GM12878 (cell line): ENCODE measurements at regions of chr11 and their contacts with region 1.

Region 1: GRCh38 chr11:119334174-119334930 is at the start of gene RNF26:
- DNase-seq: peak; percentile 95
- ATAC-seq: peak; percentile 97
- H3K4me3 ChIP-seq: peak within 1 kb of the TSS; percentile 91
- H3K27ac ChIP-seq: peak within 1 kb of the TSS; percentile 85
- H3K4me1 ChIP-seq: peaks cover 12% of the 10 kb centered on the region
- H3K27me3 ChIP-seq: no peaks in the 10 kb centered on the region
- CTCF ChIP-seq: no peak
- EP300 ChIP-seq: no peak
- POLR2A ChIP-seq: peak; percentile 91
- RAD21 ChIP-seq: no peak
- polyA plus RNA-seq, gene RNF26: 2.8 to 4.2 TPM

Region 2: DNA sequence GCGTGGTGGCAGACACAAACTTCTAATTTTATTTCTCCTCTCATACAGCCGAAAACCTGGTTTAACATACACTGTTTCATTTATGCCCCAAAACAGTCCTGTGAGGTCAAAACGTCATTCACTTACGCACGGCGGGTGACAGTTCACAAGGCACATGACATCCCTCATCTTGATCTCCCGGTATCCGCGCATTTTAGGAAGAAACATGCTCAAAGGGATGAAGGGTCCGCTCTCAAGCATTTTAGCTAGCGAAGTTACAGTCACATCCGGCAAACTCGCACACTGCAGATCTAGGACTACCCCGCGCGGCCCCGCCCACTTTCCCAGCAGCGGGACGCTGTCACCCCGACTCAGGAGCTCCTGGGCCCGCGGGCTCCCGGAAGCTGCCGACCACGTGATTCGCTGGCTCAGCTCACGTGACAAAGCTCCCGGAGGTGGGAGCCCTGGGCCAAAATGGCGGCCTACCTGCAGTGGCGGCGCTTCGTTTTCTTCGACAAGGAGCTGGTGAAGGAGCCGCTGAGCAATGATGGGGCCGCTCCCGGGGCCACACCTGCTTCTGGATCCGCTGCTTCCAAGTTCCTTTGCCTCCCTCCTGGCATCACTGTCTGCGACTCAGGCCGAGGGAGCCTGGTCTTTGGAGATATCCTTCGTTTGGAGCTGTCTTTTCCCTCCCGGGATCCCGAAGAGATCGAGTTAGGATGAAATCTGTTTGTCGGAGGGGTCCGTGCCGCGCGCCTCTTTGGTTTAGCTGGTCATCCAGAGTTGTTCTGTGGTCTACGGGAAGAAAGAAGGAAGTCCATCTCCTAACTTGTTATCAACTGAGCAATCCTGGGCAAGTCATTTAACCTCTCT is 266.8 kb before region 1 on chr11 and contains the start of gene VPS11:
- CTCF ChIA-PET with region 1: interaction called, 9 read pairs
- POLR2A ChIA-PET with region 1: no interaction called
- RAD21 ChIA-PET with region 1: interaction called, 4 read pairs
- SMC1A ChIA-PET with region 1: no interaction called
- in situ Hi-C with region 1: no loop called
- intact Hi-C with region 1: loop called (anchors 5 kb)
- DNase-seq: peak; percentile 78
- ATAC-seq: peak; percentile 98
- H3K4me3 ChIP-seq: peak within 1 kb of the TSS; percentile 80
- H3K27ac ChIP-seq: peak within 1 kb of the TSS; percentile 59
- H3K4me1 ChIP-seq: no peaks in the 10 kb centered on the region
- H3K27me3 ChIP-seq: no peaks in the 10 kb centered on the region
- CTCF ChIP-seq: no peak
- EP300 ChIP-seq: 0 out of 4 replicates have a peak, but pooled peaks have one; percentile 17 to 29
- POLR2A ChIP-seq: peak; percentile 85
- RAD21 ChIP-seq: no peak
- polyA plus RNA-seq, gene VPS11: 18.3 to 18.9 TPM

Region 3: GRCh38 chr11:119205574-119206510 is 128.5 kb before region 1 on chr11 and contains the start of gene CBL:
- CTCF ChIA-PET with region 1: interaction called, 13 read pairs
- POLR2A ChIA-PET with region 1: interaction called, 3 read pairs
- RAD21 ChIA-PET with region 1: interaction called, 3 read pairs
- SMC1A ChIA-PET with region 1: no interaction called
- in situ Hi-C with region 1: no loop called
- intact Hi-C with region 1: no loop called
- DNase-seq: peak; percentile 47
- ATAC-seq: peak; percentile 91
- H3K4me3 ChIP-seq: peak within 1 kb of the TSS; percentile 93
- H3K27ac ChIP-seq: peak within 1 kb of the TSS; percentile 88
- H3K4me1 ChIP-seq: peaks cover 9% of the 10 kb centered on the region
- H3K27me3 ChIP-seq: no peaks in the 10 kb centered on the region
- CTCF ChIP-seq: peak; percentile 85 to 92 (median 91)
- EP300 ChIP-seq: no peak
- POLR2A ChIP-seq: peak; percentile 81
- RAD21 ChIP-seq: peak; percentile 62
- polyA plus RNA-seq, gene CBL: 3.9 to 7.6 TPM

Region 4: GRCh38 chr11:119315131-119316015 is 19.0 kb before region 1 on chr11:
- CTCF ChIA-PET with region 1: interaction called, 88 read pairs
- POLR2A ChIA-PET with region 1: interaction called, 9 read pairs
- RAD21 ChIA-PET with region 1: interaction called, 10 read pairs
- SMC1A ChIA-PET with region 1: interaction called, 14 read pairs
- in situ Hi-C with region 1: no loop called
- intact Hi-C with region 1: no loop called
- DNase-seq: no peak
- ATAC-seq: peak; percentile 61
- H3K4me3 ChIP-seq: peak overlapping the region; percentile 57
- H3K27ac ChIP-seq: no peak overlapping the region
- H3K4me1 ChIP-seq: peaks cover 35% of the 10 kb centered on the region
- H3K27me3 ChIP-seq: peaks cover 1 to 15% of the 10 kb centered on the region in 2 experiments; a peak in 3 of 4 replicates
- CTCF ChIP-seq: 0 out of 6 replicates have a peak, but pooled peaks of 2 of the 3 experiments have one; percentile 0 to 5
- EP300 ChIP-seq: no peak
- POLR2A ChIP-seq: no peak
- RAD21 ChIP-seq: no peak

Region 5: DNA sequence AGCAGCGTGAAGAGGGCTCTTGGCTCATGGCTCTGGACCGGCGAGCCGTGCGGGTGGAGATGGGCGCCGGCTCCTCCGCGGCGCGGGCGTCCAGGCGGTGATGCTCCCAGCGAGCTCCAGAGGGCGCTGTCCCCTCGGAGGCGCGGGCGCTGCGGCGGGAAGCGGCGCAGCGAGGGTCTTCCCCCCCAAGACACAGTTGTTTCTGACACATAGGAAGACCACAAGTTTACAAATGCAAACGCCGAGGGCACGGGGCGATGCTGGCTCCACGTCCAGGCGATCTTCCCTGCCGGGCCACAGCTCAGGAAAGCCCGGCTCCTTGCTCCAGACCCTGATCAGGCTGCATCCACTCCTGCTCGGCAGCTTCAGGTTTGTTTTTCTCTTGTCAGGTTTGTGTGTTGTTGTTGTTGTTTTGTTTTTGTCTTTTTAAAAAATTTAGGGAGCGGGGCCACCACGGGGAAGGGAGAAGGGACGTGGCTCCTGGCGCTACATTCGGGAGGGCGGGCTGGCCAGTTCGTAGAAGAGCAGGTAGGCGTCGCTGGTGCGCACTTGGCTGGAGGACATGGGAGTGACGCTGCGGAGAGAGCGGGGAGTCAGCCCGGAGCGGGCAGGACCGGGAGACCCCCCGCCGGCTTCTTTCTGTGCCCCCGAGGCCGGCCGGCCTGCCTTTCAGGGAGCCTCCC is 22.1 kb after region 1 on chr11:
- CTCF ChIA-PET with region 1: interaction called, 15 read pairs
- POLR2A ChIA-PET with region 1: interaction called, 3 read pairs
- RAD21 ChIA-PET with region 1: no interaction called
- SMC1A ChIA-PET with region 1: interaction called, 3 read pairs
- in situ Hi-C with region 1: no loop called
- intact Hi-C with region 1: no loop called
- DNase-seq: no peak
- ATAC-seq: peak; percentile 91
- H3K4me3 ChIP-seq: peak overlapping the region; percentile 49; the same call in 1 of the 2 replicates
- H3K27ac ChIP-seq: no peak overlapping the region
- H3K4me1 ChIP-seq: peaks cover 10% of the 10 kb centered on the region
- H3K27me3 ChIP-seq: peaks cover 2 to 4% of the 10 kb centered on the region in 2 experiments; a peak in 3 of 4 replicates
- CTCF ChIP-seq: peak; percentile 78 to 94 (median 90)
- EP300 ChIP-seq: no peak
- POLR2A ChIP-seq: no peak
- RAD21 ChIP-seq: peak; percentile 72

Region 6: GRCh38 chr11:119432484-119433357 is 98.4 kb after region 1 on chr11:
- CTCF ChIA-PET with region 1: no interaction called
- POLR2A ChIA-PET with region 1: no interaction called
- RAD21 ChIA-PET with region 1: no interaction called
- SMC1A ChIA-PET with region 1: no interaction called
- in situ Hi-C with region 1: no loop called
- intact Hi-C with region 1: no loop called
- DNase-seq: no peak
- ATAC-seq: peak; percentile 48; the same call in 1 of the 3 replicates
- H3K4me3 ChIP-seq: no peak overlapping the region
- H3K27ac ChIP-seq: no peak overlapping the region
- H3K4me1 ChIP-seq: no peaks in the 10 kb centered on the region
- H3K27me3 ChIP-seq: peaks cover 0 to 11% of the 10 kb centered on the region in 2 experiments; a peak in 2 of 4 replicates
- CTCF ChIP-seq: no peak
- EP300 ChIP-seq: no peak
- POLR2A ChIP-seq: no peak
- RAD21 ChIP-seq: no peak

Region 7: GRCh38 chr11:119474682-119475596 is 140.6 kb after region 1 on chr11:
- CTCF ChIA-PET with region 1: interaction called, 15 read pairs
- POLR2A ChIA-PET with region 1: interaction called, 3 read pairs
- RAD21 ChIA-PET with region 1: interaction called, 10 read pairs
- SMC1A ChIA-PET with region 1: interaction called, 3 read pairs
- in situ Hi-C with region 1: no loop called
- intact Hi-C with region 1: loop called (anchors 5 kb)
- DNase-seq: no peak
- ATAC-seq: peak; percentile 87
- H3K4me3 ChIP-seq: no peak overlapping the region
- H3K27ac ChIP-seq: no peak overlapping the region
- H3K4me1 ChIP-seq: no peaks in the 10 kb centered on the region
- H3K27me3 ChIP-seq: peaks cover 0 to 1% of the 10 kb centered on the region in 2 experiments; a peak in 1 of 4 replicates
- CTCF ChIP-seq: peak; percentile 92 to 95 (median 93); a peak in 5 of 6 replicates
- EP300 ChIP-seq: no peak
- POLR2A ChIP-seq: no peak
- RAD21 ChIP-seq: peak; percentile 81

Region 8: GRCh38 chr11:119694334-119694733 is 360.0 kb after region 1 on chr11:
- CTCF ChIA-PET with region 1: no interaction called
- POLR2A ChIA-PET with region 1: no interaction called
- RAD21 ChIA-PET with region 1: no interaction called
- SMC1A ChIA-PET with region 1: no interaction called
- in situ Hi-C with region 1: no loop called
- intact Hi-C with region 1: no loop called
- DNase-seq: no peak
- ATAC-seq: peak; percentile 71
- H3K4me3 ChIP-seq: no peak overlapping the region
- H3K27ac ChIP-seq: no peak overlapping the region
- H3K4me1 ChIP-seq: peaks cover 25% of the 10 kb centered on the region
- H3K27me3 ChIP-seq: no peaks in the 10 kb centered on the region
- CTCF ChIP-seq: peak; percentile 17 to 39 (median 32); a peak in 4 of 6 replicates
- EP300 ChIP-seq: no peak
- POLR2A ChIP-seq: no peak
- RAD21 ChIP-seq: no peak